H1 (cell line): ENCODE measurements at regions of chr4 and their contacts with region 1.

Region 1: DNA sequence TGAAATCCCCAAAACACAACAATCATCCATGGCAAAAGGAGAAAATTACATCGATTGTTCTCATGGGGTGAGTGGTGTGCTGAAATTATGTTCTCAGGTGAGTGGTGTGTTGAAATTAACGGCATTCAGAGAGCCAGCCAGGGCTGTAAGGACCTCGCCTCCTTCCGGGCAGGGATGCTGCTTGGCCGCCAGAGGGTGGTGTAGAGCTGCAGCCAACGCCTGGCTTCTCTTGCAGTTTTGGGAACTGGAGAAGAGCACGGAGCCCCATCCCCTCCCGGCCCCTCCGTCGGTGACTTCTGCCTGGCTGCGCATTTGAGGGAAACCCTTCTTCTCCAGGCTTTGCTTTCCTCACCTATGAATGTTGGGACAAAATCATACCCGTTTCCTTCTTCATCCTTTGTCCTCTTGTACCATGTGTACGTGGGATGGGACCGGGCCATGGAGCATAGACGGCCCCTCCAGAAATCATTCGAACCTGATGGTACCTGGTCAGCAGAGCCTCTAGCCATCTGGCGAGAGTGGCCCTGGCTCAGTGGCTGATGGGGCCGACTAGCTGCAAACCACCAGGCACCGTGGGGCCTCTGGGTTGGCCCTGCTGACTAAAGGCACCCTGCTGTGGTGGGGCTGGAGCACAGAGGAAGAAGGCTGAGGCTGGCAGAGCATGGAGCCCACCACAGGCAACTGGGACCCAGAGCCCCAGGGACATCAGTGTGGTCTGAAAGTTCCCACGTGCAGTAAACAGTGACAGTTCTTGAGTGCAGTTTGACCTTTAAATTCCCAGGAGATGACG is 28.4 kb downstream of the TRMT44 start:
- DNase-seq: peak; percentile 57 to 92
- H3K4me3 ChIP-seq: no peak overlapping the region
- H3K27ac ChIP-seq: no peak overlapping the region
- H3K4me1 ChIP-seq: peaks cover 0 to 5% (median 2%) of the 10 kb centered on the region in 4 experiments; a peak in 2 of 7 replicates
- H3K27me3 ChIP-seq: no peaks in the 10 kb centered on the region
- CTCF ChIP-seq: peak in 2 of 3 experiments; percentile 97 to 99; a peak in 3 of 4 replicates
- EP300 ChIP-seq: no peak
- POLR2A ChIP-seq: no peak
- RAD21 ChIP-seq: peak; percentile 98 to 99

Region 2: GRCh38 chr4:8504279-8505007 is 35.5 kb after region 1 on chr4:
- CTCF ChIA-PET with region 1: interaction called, 12 read pairs
- POLR2A ChIA-PET with region 1: interaction called, 3 read pairs
- DNase-seq: no peak
- H3K4me3 ChIP-seq: no peak overlapping the region
- H3K27ac ChIP-seq: no peak overlapping the region
- H3K4me1 ChIP-seq: peaks cover 6 to 24% (median 14%) of the 10 kb centered on the region in 4 experiments
- H3K27me3 ChIP-seq: no peaks in the 10 kb centered on the region; a peak in 1 of 7 replicates
- CTCF ChIP-seq: no peak
- EP300 ChIP-seq: no peak
- POLR2A ChIP-seq: no peak
- RAD21 ChIP-seq: no peak

Region 3: DNA sequence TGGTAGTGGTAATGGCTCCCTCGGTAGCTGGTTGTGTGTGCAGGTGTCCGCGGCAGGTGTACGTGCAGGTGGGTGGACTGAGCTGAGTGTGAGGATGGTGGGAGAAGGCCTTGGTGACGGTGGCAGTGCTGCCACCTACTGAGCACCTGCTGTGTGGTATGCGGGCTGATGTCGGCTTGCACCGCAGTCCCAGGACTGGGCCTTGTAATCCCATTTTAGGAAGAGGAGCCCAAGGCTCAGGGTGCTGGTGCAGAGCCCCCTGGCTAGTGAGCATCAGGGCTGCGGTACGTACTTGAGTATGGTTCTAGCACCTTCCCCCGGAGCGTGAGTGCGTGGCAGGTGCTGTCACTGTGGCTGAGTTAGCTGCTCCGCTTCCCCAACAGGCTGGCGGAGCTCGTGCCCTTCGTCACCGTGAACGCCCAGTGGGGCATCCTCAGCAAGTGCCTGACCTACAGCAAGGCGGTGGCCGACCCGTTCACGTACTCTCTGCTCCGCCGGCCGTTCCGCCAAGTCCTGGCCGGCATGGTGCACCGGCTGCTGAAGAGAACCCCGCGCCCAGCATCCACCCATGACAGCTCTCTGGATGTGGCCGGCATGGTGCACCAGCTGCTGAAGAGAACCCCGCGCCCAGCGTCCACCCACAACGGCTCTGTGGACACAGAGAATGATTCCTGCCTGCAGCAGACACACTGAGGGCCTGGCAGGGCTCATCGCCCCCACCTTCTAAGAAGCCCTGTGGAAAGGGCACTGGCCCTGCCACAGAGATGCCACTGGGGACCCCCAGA is 117.9 kb after region 1 on chr4:
- CTCF ChIA-PET with region 1: interaction called, 66 read pairs
- POLR2A ChIA-PET with region 1: interaction called, 7 read pairs
- DNase-seq: no peak
- H3K4me3 ChIP-seq: no peak overlapping the region
- H3K27ac ChIP-seq: no peak overlapping the region
- H3K4me1 ChIP-seq: peaks cover 0 to 13% (median 9%) of the 10 kb centered on the region in 4 experiments; a peak in 5 of 7 replicates
- H3K27me3 ChIP-seq: peaks cover 0 to 8% (median 5%) of the 10 kb centered on the region in 4 experiments; a peak in 5 of 7 replicates
- CTCF ChIP-seq: peak in 2 of 3 experiments; percentile 5; a peak in 1 of 4 replicates
- EP300 ChIP-seq: no peak
- POLR2A ChIP-seq: no peak
- RAD21 ChIP-seq: peak in 1 of 2 experiments; percentile 26; a peak in 2 of 4 replicates

Region 4: GRCh38 chr4:8599657-8600056 is 130.7 kb after region 1 on chr4:
- CTCF ChIA-PET with region 1: interaction called, 34 read pairs
- POLR2A ChIA-PET with region 1: no interaction called
- DNase-seq: no peak
- H3K4me3 ChIP-seq: no peak overlapping the region
- H3K27ac ChIP-seq: no peak overlapping the region
- H3K4me1 ChIP-seq: no peaks in the 10 kb centered on the region
- H3K27me3 ChIP-seq: no peaks in the 10 kb centered on the region
- CTCF ChIP-seq: no peak
- EP300 ChIP-seq: no peak
- POLR2A ChIP-seq: no peak
- RAD21 ChIP-seq: no peak